Activated CD4-positive, alpha-beta T cell treated with anti-CD3 and anti-CD28 coated beads for 36 hours (primary cell): ENCODE measurements at regions of chr12 and their contacts with region 1.

Region 1: DNA sequence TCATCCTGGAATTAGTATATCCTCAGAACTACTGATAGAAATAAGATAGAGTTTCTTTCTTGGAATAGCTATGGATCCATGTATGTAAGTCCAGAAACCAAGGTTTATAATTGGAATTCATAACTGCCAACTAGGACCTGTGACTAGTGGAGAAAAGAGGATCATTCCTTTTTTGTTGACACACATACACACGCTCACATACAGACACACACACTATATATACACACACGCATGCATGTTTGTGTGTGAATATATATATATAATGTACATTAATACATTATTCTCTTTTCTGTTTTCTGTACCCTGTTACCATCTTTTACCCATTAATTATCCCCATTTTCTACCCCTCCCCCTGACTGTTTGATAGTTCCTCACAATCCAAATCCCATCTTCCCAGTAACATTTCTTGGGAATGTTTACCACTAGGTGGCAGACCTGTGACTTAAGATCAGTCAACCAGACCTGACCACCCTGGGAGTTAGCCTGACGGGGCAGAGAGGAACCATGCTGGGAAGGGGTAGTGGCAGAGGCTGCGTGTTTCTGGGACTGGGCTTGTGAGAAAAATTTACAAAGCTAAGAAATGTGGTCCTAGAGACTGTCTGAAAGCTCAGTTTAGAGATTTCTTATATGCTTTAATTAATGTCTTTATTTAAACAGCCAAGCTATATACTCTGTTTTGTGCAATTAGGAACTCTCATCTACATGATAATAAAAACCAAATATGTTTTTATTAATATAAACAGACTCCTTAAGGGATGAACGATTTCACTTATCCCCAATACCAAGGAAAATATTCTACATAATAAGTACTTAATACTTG is 308.0 kb downstream of the PPFIA2 start:
- DNase-seq: peak; percentile 10
- ATAC-seq: no peak
- H3K4me3 Mint-ChIP-seq: no peak overlapping the region
- H3K27ac Mint-ChIP-seq: no peak overlapping the region
- H3K4me1 Mint-ChIP-seq: no peaks in the 10 kb centered on the region
- H3K27me3 Mint-ChIP-seq: no peaks in the 10 kb centered on the region

Region 2: GRCh38 chr12:81627336-81628189 is 176.4 kb after region 1 on chr12:
- CTCF ChIA-PET with region 1: no interaction called
- POLR2A ChIA-PET with region 1: no interaction called
- intact Hi-C with region 1: loop called (anchors 1 to 5 kb)
- DNase-seq: no peak
- ATAC-seq: no peak
- H3K4me3 Mint-ChIP-seq: no peak overlapping the region
- H3K27ac Mint-ChIP-seq: no peak overlapping the region
- H3K4me1 Mint-ChIP-seq: no peaks in the 10 kb centered on the region
- H3K27me3 Mint-ChIP-seq: peaks cover 5% of the 10 kb centered on the region